ENCODE measurements at regions of chr4 and their contacts with region 1.

Region 1: GRCh38 chr4:179695175-179695574 is 2252.9 kb upstream of the AGA start:
- DNase-seq: peak; percentile 1
- H3K27ac ChIP-seq: no peak overlapping the region
- CTCF ChIP-seq: no peak

Region 2: DNA sequence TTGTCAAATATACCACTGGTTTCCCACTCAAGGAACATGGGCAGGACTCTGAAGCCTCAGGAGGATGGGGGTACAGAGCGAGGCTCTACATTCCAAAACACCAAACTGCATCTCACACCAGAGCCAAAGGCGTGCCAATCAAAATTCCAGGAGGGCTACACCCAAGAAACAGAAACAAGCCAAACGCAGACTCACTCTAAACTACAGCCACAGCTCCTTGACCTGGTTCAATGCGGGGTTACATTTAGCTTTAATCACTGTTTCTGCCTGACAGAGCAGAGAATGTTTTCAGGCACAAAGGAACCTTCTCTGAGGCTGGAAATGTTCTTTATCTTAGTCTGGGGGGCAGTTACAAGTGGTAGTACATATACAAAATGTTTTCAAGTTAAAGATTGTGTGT is 131.4 kb before region 1 on chr4:
- CTCF ChIA-PET with region 1: interaction called, 10 read pairs
- POLR2A ChIA-PET with region 1: no interaction called
- DNase-seq: no peak
- H3K27ac ChIP-seq: no peak overlapping the region
- CTCF ChIP-seq: no peak